Mammary epithelial cell (primary cell): ENCODE measurements at regions of chr7 and their contacts with region 1.

Region 1: DNA sequence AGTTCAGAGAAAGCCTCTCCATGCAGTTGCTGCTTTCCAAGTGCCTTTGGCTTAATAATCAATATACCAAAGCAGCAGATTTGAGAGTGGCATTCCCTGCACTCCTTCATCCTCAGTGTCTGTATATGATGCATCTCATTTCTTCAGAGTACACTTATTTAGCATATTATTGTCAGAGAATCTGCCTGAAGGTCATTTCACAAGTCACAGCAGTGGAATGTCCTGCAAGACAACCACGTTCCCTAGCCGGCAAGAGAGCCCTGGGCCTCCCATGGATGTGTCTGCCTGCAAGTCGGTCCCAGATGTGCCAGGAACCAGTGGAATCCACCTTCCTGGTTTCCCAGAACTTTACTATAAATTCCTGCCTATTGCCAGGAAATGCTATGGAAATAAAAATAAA is 289.4 kb upstream of the IGFBP3 start:
- DNase-seq: no peak
- H3K4me3 ChIP-seq: no peak overlapping the region
- H3K27ac ChIP-seq: no peak overlapping the region
- H3K4me1 ChIP-seq: peaks cover 2% of the 10 kb centered on the region
- H3K27me3 ChIP-seq: no peaks in the 10 kb centered on the region
- CTCF ChIP-seq: no peak

Region 2: GRCh38 chr7:46239856-46240255 is 29.4 kb after region 1 on chr7:
- CTCF ChIA-PET with region 1: no interaction called
- dilution Hi-C with region 1: no loop called
- in situ Hi-C with region 1: no loop called
- intact Hi-C with region 1: loop called (anchors 1 kb)
- DNase-seq: no peak
- H3K4me3 ChIP-seq: no peak overlapping the region
- H3K27ac ChIP-seq: no peak overlapping the region
- H3K4me1 ChIP-seq: no peaks in the 10 kb centered on the region
- H3K27me3 ChIP-seq: no peaks in the 10 kb centered on the region
- CTCF ChIP-seq: no peak